ENCODE measurements at regions of chr1 and their contacts with region 1.

Region 1: DNA sequence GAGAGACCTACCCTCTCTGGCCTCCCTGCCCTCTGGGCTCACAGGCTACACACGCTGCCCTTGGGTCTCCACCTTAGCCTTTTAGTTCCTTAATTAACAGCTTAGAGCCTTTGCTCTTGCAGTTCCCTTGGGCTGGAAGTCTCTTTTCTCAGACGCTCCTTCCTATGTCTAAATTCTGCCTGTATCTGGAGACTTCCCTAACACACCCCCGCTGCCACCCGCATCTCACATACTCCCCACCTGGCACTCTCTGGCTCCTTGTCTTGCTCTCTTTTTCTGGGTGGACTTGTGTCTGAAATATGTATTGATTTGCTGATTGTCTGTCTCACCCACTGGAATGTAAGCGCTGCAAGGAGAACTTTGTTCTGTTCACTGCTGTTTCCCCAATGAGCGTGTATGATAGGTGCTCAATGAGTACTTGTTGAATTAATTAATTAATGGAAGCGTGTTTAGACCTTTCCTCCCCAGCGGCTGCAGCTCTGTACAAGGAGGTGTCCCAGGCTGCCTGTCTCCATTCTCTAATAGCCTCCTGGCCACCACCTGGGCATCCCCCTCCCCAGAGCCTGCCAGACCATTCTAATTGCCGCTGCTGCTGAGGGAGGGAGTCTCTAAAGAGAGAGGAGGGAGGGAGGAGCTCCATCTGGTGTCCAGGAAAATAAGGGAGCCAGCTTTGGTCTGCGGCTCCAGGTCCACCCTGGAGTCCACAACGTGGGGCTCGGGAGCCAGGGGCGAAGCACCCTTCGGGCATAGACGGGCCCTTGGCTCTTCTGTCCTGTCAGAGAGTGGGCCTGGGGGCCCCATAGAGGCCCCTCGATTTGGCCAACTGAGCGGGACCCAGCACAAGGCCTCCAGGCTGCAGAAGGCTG is 95.4 kb downstream of the RNF220 start:
- DNase-seq: no peak
- ATAC-seq: peak; percentile 70 to 75

Region 2: DNA sequence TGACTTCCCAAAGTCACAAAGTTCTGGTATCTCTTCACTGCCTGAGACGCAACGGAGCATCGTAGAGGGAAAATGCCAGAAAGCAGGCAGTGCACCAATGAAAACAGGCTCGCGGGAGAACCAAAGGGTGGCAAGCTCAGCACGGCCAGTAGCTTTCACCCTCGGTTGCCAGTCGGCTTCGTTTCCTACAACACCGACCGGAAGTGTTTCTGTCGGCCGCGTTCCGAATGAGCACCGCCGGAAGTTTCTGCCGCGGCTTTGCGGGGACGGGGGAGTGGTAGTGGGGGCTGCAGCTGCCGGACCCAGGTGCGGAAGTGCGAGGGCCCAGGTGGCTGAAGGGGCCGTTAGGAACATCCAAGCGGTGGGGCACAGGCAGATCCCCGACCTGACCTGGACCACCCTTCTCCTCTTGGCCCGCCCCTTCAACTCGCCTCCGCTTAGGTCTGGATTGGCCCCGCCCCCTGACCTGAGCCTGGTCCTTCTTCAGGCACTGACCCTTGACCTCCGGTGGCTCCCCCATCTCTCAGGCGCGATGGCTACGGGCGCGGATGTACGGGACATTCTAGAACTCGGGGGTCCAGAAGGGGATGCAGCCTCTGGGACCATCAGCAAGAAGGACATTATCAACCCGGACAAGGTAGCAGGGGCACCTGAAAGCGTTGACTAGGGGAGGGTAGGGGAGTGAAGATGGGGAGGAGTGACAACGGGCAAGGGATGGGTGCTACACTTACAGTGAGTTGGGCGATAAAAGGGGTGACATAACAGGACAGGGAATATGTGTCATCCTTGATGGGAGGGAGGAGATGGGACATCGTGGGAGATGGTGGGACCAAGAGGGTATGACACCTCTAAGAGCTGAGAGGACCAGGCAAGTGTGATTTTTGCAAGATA is 286.9 kb before region 1 on chr1 and contains the start of gene DMAP1:
- intact Hi-C with region 1: loop called in 1 of 2 experiments (anchors 5 kb)
- DNase-seq: peak; percentile 84
- ATAC-seq: peak; percentile 94 to 95
- total RNA-seq, gene DMAP1: 23.6 to 25.4 TPM

Region 3: DNA sequence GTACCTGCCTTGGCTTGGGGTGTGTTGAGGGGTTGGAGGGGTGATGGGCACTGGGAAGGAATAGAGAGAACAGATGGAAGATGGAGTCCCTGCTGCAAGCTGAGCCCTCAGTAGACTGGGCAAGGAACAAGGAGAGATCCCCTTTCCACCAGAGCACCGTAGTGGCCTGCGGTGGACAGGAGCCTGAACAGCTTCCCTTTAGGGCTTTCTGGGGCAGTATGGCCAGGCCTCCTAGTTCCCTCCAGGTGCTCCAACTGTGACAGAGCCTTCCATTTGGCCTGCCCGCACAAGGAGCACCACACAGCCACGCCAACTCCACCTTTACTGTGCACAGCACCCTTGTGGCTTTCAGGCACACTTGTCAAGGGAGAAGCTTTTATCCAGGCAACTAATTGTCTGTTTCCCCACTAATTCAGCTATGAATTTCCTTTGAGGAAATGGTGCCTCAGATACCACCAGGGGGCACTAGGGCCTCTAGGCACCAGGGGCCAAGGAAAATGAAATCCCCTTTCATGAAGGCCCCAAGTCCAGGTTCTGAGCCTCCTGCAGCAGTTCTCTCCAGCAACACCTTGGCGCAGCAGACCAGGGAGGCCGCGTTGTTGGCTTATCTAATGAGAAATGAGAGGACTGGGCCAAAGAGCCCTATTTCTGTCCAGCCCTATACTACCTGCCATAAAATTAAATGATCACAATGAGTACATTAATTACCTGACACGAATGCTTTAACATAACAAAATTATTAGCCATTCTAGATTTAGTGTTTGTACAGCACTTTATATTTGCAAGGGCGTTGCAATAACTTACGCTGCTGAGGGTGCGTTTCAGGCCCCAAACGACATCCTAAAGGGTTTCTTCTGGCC is 122.3 kb before region 1 on chr1:
- intact Hi-C with region 1: loop called (anchors 5 to 10 kb)
- DNase-seq: peak; percentile 41
- ATAC-seq: peak; percentile 29 to 55

Region 4: GRCh38 chr1:44405041-44405797 is 95.2 kb before region 1 on chr1 and contains the start of gene RNF220:
- intact Hi-C with region 1: loop called in 1 of 2 experiments (anchors 10 kb)
- DNase-seq: peak; percentile 44
- ATAC-seq: peak; percentile 42 to 80
- total RNA-seq, gene RNF220: 67.4 to 68.9 TPM

Region 5: GRCh38 chr1:44423591-44424537 is 76.5 kb before region 1 on chr1:
- intact Hi-C with region 1: loop called in 1 of 2 experiments (anchors 5 kb)
- DNase-seq: peak; percentile 46
- ATAC-seq: peak; percentile 86 to 96

Measured in left cardiac atrium (tissue), 4 donors.